Endothelial cell of umbilical vein (primary cell): ENCODE measurements at regions of chr6 and their contacts with region 1.

Region 1: GRCh38 chr6:26054857-26055669 is 32.2 kb upstream of the HFE start:
- DNase-seq: peak; percentile 94
- H3K4me3 ChIP-seq: peak overlapping the region; percentile 62 to 74 (median 65)
- H3K27ac ChIP-seq: peak overlapping the region; percentile 98
- H3K4me1 ChIP-seq: peaks cover 13% of the 10 kb centered on the region
- H3K27me3 ChIP-seq: no peaks in the 10 kb centered on the region
- CTCF ChIP-seq: no peak
- POLR2A ChIP-seq: peak; percentile 98

Region 2: GRCh38 chr6:26103770-26104456 is 48.9 kb after region 1 on chr6:
- CTCF ChIA-PET with region 1: interaction called, 202 read pairs
- POLR2A ChIA-PET with region 1: interaction called, 9 read pairs
- dilution Hi-C with region 1: no loop called
- intact Hi-C with region 1: loop called (anchors 2 kb)
- DNase-seq: peak; percentile 97
- H3K4me3 ChIP-seq: peak overlapping the region; percentile 32 to 46 (median 34)
- H3K27ac ChIP-seq: peak overlapping the region; percentile 87
- H3K4me1 ChIP-seq: peaks cover 18% of the 10 kb centered on the region
- H3K27me3 ChIP-seq: peaks cover 0 to 4% of the 10 kb centered on the region in 2 experiments
- CTCF ChIP-seq: peak; percentile 31 to 57
- POLR2A ChIP-seq: peak; percentile 99